Caco-2 (cell line): ENCODE measurements at regions of chr22 and their contacts with region 1.

Region 1: DNA sequence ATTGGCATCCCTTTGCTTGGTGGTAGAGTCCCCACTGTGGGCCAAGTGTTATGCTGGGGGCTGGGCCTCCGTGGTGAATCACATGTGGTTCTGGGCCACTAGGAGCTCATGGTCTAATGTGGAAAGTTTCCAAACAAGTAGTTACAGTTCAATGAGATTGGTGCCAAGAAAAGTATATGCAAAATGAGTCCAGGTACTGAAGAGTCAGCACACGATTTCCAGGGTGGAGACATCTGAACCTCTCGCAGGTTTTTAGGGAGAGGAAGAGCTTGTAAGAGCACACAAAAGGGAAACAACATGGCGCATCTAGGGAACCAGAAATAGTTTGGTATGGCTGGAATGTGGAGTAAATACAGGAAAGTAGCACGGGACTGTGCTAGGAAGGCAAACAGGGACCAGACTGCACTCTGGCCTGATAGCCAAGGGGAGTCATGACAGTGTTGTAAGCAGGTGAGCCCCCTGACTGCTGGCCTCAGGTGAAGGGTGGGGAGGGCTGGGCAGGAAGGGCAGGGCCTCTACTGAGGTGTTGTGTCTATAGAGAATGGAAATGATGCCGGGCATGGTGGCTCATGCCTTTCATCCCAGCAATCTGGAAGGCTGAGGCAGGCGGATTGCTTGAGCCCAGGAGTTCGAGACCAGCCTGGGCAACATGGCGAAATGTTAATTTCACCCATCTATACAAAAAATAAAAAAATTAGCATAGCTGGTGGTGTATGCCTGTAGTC is 12.6 kb downstream of the POLR2F start:
- DNase-seq: no peak
- H3K4me3 ChIP-seq: no peak overlapping the region
- H3K4me3 Mint-ChIP-seq: no peak overlapping the region
- H3K27ac Mint-ChIP-seq: peak overlapping the region; percentile 75
- H3K4me1 ChIP-seq: no peaks in the 10 kb centered on the region
- H3K4me1 Mint-ChIP-seq: peaks cover 7% of the 10 kb centered on the region
- H3K27me3 ChIP-seq: no peaks in the 10 kb centered on the region
- H3K27me3 Mint-ChIP-seq: no peaks in the 10 kb centered on the region
- CTCF ChIP-seq: no peak

Region 2: GRCh38 chr22:37817705-37818408 is 148.2 kb before region 1 on chr22:
- CTCF ChIA-PET with region 1: no interaction called
- POLR2A ChIA-PET with region 1: no interaction called
- intact Hi-C with region 1: loop called (anchors 1 kb)
- DNase-seq: peak; percentile 72 to 91
- H3K4me3 ChIP-seq: no peak overlapping the region
- H3K4me3 Mint-ChIP-seq: peak overlapping the region; percentile 37
- H3K27ac Mint-ChIP-seq: no peak overlapping the region
- H3K4me1 ChIP-seq: peaks cover 9% of the 10 kb centered on the region
- H3K4me1 Mint-ChIP-seq: peaks cover 12% of the 10 kb centered on the region
- H3K27me3 ChIP-seq: no peaks in the 10 kb centered on the region
- H3K27me3 Mint-ChIP-seq: no peaks in the 10 kb centered on the region
- CTCF ChIP-seq: peak; percentile 85 to 87

Region 3: DNA sequence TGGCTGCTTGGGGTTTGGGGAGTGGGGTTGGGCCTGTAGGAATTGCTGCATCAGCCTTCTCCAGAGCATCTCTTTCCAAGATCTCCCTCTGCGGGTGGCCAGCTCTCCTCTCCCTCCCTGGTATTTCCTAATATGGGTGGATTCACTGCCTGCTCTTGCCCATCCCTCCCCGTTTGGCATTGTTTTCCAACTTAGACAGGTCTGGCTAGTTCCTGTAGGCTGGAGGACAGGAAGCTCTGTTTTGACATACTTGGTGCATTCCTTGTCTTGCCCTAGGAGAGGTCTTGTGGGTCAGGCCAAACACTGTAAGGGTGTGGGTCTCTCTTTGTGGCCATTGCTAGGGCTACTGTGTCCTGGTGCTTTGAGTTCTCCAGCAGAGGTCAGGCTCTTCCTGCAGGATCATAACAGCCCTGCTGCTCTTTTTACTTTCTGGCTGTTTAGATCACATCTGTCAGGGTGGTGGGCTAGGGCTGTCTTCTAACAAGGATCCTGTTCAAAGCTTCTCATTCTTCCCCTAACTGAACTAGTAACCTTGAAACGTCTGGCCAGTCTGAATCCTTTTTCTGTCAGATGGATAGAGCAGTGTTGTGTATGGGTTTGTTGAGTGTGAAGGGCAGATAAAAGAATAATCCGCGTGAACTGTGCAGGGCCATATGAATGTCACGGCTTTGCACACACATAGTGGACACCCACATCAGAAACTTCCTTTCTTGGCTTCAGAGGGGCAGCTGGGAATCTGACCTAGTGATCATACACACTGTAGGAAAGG is 78.3 kb before region 1 on chr22:
- CTCF ChIA-PET with region 1: interaction called, 5 read pairs
- POLR2A ChIA-PET with region 1: no interaction called
- intact Hi-C with region 1: loop called (anchors 1 kb)
- DNase-seq: peak; percentile 81
- H3K4me3 ChIP-seq: no peak overlapping the region
- H3K4me3 Mint-ChIP-seq: no peak overlapping the region
- H3K27ac Mint-ChIP-seq: peak overlapping the region; percentile 74
- H3K4me1 ChIP-seq: peaks cover 17% of the 10 kb centered on the region
- H3K4me1 Mint-ChIP-seq: peaks cover 24% of the 10 kb centered on the region
- H3K27me3 ChIP-seq: no peaks in the 10 kb centered on the region
- H3K27me3 Mint-ChIP-seq: no peaks in the 10 kb centered on the region
- CTCF ChIP-seq: peak; percentile 48 to 52

Region 4: GRCh38 chr22:37898441-37899181 is 67.5 kb before region 1 on chr22:
- CTCF ChIA-PET with region 1: no interaction called
- POLR2A ChIA-PET with region 1: no interaction called
- intact Hi-C with region 1: no loop called
- DNase-seq: peak; percentile 32 to 67
- H3K4me3 ChIP-seq: no peak overlapping the region
- H3K4me3 Mint-ChIP-seq: no peak overlapping the region
- H3K27ac Mint-ChIP-seq: peak overlapping the region; percentile 47
- H3K4me1 ChIP-seq: peaks cover 50% of the 10 kb centered on the region
- H3K4me1 Mint-ChIP-seq: peaks cover 27% of the 10 kb centered on the region
- H3K27me3 ChIP-seq: no peaks in the 10 kb centered on the region
- H3K27me3 Mint-ChIP-seq: no peaks in the 10 kb centered on the region
- CTCF ChIP-seq: no peak

Region 5: DNA sequence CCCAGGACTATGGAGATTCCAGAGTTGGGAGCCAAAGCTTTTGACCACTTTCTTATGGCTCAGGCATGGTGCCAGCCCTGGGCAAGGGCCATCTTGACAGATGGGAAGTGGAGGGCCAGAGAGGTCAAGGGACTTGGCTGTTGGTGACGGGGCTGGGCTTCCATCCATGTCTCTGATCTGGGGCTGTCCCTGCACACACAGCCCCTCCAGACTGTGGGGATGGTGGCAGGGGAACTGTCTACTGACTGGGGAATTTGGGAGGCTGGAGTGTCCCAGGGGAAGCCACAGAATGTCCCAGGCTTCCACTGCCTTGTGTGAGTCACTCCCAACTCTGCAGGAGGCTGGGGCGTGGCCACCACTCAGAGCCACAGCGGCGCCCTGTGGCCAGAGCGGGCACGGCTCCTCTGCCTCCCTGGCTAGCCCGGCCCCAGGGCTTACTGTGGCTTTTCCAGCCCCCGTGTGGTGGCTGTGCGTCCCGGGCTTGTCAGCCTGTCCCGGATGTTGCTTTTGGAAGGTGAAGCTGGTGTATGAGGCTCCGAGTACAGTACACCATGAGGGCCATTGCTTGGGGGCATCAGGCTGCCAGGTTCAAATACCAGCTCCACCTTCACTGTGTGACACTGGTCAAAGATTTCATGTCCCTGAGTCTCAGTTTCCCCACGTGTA is 32.3 kb before region 1 on chr22:
- CTCF ChIA-PET with region 1: no interaction called
- POLR2A ChIA-PET with region 1: no interaction called
- intact Hi-C with region 1: loop called (anchors 5 kb)
- DNase-seq: peak; percentile 82 to 90
- H3K4me3 ChIP-seq: no peak overlapping the region
- H3K4me3 Mint-ChIP-seq: no peak overlapping the region
- H3K27ac Mint-ChIP-seq: peak overlapping the region; percentile 78
- H3K4me1 ChIP-seq: no peaks in the 10 kb centered on the region
- H3K4me1 Mint-ChIP-seq: peaks cover 8% of the 10 kb centered on the region
- H3K27me3 ChIP-seq: no peaks in the 10 kb centered on the region
- H3K27me3 Mint-ChIP-seq: no peaks in the 10 kb centered on the region
- CTCF ChIP-seq: peak; percentile 81 to 97

Region 6: GRCh38 chr22:37999956-38000272 is 33.8 kb after region 1 on chr22:
- CTCF ChIA-PET with region 1: no interaction called
- POLR2A ChIA-PET with region 1: no interaction called
- intact Hi-C with region 1: no loop called
- DNase-seq: no peak
- H3K4me3 ChIP-seq: no peak overlapping the region
- H3K4me3 Mint-ChIP-seq: no peak overlapping the region
- H3K27ac Mint-ChIP-seq: no peak overlapping the region
- H3K4me1 ChIP-seq: no peaks in the 10 kb centered on the region
- H3K4me1 Mint-ChIP-seq: peaks cover 5% of the 10 kb centered on the region
- H3K27me3 ChIP-seq: no peaks in the 10 kb centered on the region
- H3K27me3 Mint-ChIP-seq: no peaks in the 10 kb centered on the region
- CTCF ChIP-seq: no peak

Region 7: GRCh38 chr22:38056969-38057891 is 91.1 kb after region 1 on chr22 and contains the start of gene PICK1:
- CTCF ChIA-PET with region 1: no interaction called
- POLR2A ChIA-PET with region 1: no interaction called
- intact Hi-C with region 1: no loop called
- DNase-seq: peak; percentile 92
- H3K4me3 ChIP-seq: peak within 1 kb of the TSS; percentile 47
- H3K4me3 Mint-ChIP-seq: peak within 1 kb of the TSS; percentile 77
- H3K27ac Mint-ChIP-seq: peak within 1 kb of the TSS; percentile 99
- H3K4me1 ChIP-seq: peaks cover 6% of the 10 kb centered on the region; the same call in 1 of the 2 replicates
- H3K4me1 Mint-ChIP-seq: peaks cover 8% of the 10 kb centered on the region
- H3K27me3 ChIP-seq: no peaks in the 10 kb centered on the region
- H3K27me3 Mint-ChIP-seq: peaks cover 2% of the 10 kb centered on the region
- CTCF ChIP-seq: no peak
- total RNA-seq, gene PICK1: 40.2 and 41.1 TPM in 2 replicates